ENCODE measurements at regions of chr14 and their contacts with region 1.

Region 1: DNA sequence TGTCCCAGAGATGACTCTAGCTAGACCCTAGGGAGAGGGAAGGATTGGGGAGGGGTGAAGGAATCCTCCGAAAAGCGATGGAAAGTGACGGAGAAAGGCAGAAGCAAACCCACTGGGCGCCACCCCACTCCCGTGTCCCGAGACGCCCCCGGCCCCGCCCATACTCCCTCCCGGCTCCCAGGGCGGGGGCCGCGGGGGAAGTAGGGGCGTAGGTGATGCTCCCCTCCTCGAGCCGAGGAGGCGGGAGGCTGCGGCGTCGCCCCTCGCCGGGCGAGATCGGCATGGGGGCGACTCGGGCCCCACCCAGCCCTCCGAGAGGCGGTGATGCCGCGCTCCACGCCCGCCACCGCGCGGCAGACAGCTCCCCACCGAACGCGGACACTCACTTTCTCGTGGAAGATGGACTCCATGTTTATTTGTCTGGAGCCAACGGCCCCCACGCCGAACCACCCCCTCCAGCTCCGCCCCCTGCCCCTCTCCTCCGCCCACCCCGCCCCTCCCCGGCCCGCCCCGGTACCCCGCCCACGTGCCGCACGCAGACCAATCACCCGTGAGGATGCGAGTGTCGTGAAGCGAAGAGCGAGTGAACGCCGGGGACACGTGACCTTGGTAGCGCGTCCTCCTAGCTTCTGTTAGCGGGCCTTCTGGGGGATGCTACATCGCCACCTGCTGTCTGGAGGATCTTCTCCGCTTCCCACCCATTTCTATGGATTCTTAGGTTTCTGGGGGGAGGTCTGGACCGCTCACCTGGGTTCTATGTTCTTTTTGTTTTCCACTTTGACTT is at the start of gene ATXN3:
- DNase-seq: peak; percentile 96
- H3K4me3 ChIP-seq: peak within 1 kb of the TSS; percentile 63 to 90 (median 83)
- H3K27ac ChIP-seq: peak within 1 kb of the TSS; percentile 56
- H3K4me1 ChIP-seq: peaks cover 5% of the 10 kb centered on the region
- H3K27me3 ChIP-seq: peaks cover 0 to 1% of the 10 kb centered on the region in 2 experiments
- CTCF ChIP-seq: peak; percentile 69 to 89
- POLR2A ChIP-seq: peak; percentile 86
- total RNA-seq, gene ATXN3: 28.1 and 30.2 TPM in 2 replicates

Region 2: DNA sequence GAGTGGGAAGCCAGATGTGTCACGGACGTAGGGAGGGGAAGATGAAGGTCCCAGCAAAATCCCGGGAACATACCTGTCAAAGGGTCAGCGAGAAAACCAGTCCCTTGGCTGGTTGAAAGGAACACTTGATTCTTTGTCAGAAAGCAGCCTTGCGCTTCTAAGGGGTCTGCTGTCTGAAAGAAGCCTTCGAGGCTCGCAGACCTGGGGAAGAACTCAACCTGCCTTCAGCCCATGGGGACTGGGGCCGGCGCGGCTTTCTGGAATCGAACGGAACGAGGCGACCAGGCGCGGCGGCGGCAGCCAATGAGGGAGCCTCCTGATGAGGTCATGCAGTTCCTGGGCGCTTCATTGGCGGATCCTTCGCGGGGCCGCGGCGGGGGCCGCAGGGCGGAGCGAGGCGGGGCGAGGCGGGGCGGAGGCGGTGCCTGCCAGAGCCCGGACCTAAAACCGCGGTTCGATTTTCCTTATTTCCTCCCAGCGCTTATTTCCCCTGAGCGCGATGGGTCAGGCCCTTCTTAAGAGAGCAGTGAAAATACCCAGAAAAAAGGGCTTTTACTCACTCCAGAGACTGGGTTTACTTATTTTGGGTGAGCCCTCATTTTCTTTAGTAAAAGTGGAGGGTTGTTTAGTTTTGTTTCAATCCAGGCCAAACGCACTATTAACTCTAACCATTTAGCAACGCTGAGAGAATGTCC is 1278.3 kb before region 1 on chr14:
- CTCF ChIA-PET with region 1: no interaction called
- POLR2A ChIA-PET with region 1: no interaction called
- dilution Hi-C with region 1: no loop called
- intact Hi-C with region 1: no loop called
- DNase-seq: peak; percentile 93
- H3K4me3 ChIP-seq: peak overlapping the region; percentile 14 to 54 (median 15)
- H3K27ac ChIP-seq: peak overlapping the region; percentile 39
- H3K4me1 ChIP-seq: peaks cover 10% of the 10 kb centered on the region
- H3K27me3 ChIP-seq: no peaks in the 10 kb centered on the region
- CTCF ChIP-seq: no peak
- POLR2A ChIP-seq: peak; percentile 71

Region 3: GRCh38 chr14:91947471-91948184 is 158.7 kb before region 1 on chr14 and contains the start of gene FBLN5:
- CTCF ChIA-PET with region 1: interaction called, 3 read pairs
- POLR2A ChIA-PET with region 1: no interaction called
- dilution Hi-C with region 1: no loop called
- intact Hi-C with region 1: loop called (anchors 5 kb)
- DNase-seq: peak; percentile 24
- H3K4me3 ChIP-seq: peak within 1 kb of the TSS; percentile 2 to 55 (median 48)
- H3K27ac ChIP-seq: no peak within 1 kb of the TSS
- H3K4me1 ChIP-seq: peaks cover 4% of the 10 kb centered on the region
- H3K27me3 ChIP-seq: peaks cover 0 to 17% of the 10 kb centered on the region in 2 experiments
- CTCF ChIP-seq: no peak
- POLR2A ChIP-seq: peak; percentile 18
- total RNA-seq, gene FBLN5: 27.6 and 44.9 TPM in 2 replicates

Region 4: GRCh38 chr14:92039719-92040430 is 66.5 kb before region 1 on chr14 and contains the start of gene TRIP11:
- CTCF ChIA-PET with region 1: interaction called, 17 read pairs
- POLR2A ChIA-PET with region 1: interaction called, 11 read pairs
- dilution Hi-C with region 1: no loop called
- intact Hi-C with region 1: loop called (anchors 1 kb)
- DNase-seq: peak; percentile 94
- H3K4me3 ChIP-seq: peak within 1 kb of the TSS; percentile 67 to 96 (median 73)
- H3K27ac ChIP-seq: peak within 1 kb of the TSS; percentile 92
- H3K4me1 ChIP-seq: peaks cover 16% of the 10 kb centered on the region
- H3K27me3 ChIP-seq: no peaks in the 10 kb centered on the region
- CTCF ChIP-seq: no peak
- POLR2A ChIP-seq: peak; percentile 91
- total RNA-seq, gene TRIP11: 51.7 and 58.0 TPM in 2 replicates

Region 5: GRCh38 chr14:92121670-92122350 is 15.5 kb after region 1 on chr14 and contains the starts of genes CPSF2 and NDUFB1:
- CTCF ChIA-PET with region 1: interaction called, 145 read pairs
- POLR2A ChIA-PET with region 1: interaction called, 15 read pairs
- dilution Hi-C with region 1: no loop called
- intact Hi-C with region 1: loop called (anchors 1 kb)
- DNase-seq: peak; percentile 84
- H3K4me3 ChIP-seq: peak within 1 kb of the TSS; percentile 40 to 89 (median 79)
- H3K27ac ChIP-seq: peak within 1 kb of the TSS; percentile 75
- H3K4me1 ChIP-seq: peaks cover 7% of the 10 kb centered on the region
- H3K27me3 ChIP-seq: no peaks in the 10 kb centered on the region
- CTCF ChIP-seq: no peak
- POLR2A ChIP-seq: peak; percentile 95
- total RNA-seq, gene CPSF2: 76.9 and 81.7 TPM in 2 replicates
- total RNA-seq, gene NDUFB1: 95.2 and 114 TPM in 2 replicates

Region 6: GRCh38 chr14:92793709-92794546 is 687.6 kb after region 1 on chr14 and contains the start of gene GOLGA5:
- CTCF ChIA-PET with region 1: interaction called, 3 read pairs
- POLR2A ChIA-PET with region 1: interaction called, 5 read pairs
- dilution Hi-C with region 1: no loop called
- intact Hi-C with region 1: loop called (anchors 1 kb)
- DNase-seq: peak; percentile 99
- H3K4me3 ChIP-seq: peak within 1 kb of the TSS; percentile 52 to 75 (median 75)
- H3K27ac ChIP-seq: peak within 1 kb of the TSS; percentile 54
- H3K4me1 ChIP-seq: peaks cover 9% of the 10 kb centered on the region
- H3K27me3 ChIP-seq: no peaks in the 10 kb centered on the region
- CTCF ChIP-seq: no peak
- POLR2A ChIP-seq: peak; percentile 85
- total RNA-seq, gene GOLGA5: 28.9 and 29.3 TPM in 2 replicates